Astrocyte of the cerebellum (primary cell): ENCODE measurements at regions of chr3 and their contacts with region 1.

Region 1: DNA sequence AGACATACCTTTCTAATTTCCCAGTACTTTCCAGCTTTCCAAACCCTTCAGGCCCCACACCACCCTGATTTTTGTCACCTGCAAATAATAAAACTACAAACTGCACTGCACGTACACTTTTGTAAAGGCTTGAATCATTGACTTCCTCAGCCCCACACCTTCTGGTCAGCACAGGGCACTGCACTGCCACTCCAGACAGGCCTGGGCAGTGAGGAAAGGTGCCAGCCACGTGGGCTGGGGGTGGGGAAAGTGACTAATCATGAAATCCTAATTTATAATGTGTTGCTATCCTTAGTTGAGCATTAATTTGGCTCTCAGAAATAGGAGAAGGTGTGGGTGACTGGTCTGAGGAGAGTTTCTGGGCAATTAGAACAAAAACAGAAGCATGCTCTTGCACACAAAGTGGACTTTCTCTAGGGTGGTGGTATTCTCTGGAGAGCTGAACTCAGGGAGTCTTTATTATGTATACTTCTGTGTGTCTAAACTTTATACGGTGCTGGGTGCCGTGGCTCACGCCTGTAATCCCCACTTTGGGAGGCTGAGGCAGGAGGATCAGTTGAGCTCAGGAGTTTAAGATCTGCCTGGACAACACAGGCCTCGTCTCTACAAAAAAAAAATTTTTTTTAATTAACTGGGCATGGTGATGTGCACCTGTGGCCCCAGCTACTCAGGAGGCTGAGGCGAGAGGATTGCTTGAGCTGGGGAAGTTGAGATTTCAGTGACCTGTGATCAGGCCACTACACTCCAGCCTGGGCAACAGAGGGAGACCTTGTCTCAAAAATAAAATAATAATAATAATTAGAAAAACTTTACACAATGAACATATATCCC is 58.2 kb upstream of the FLNB start:
- DNase-seq: no peak
- H3K4me3 ChIP-seq: no peak overlapping the region
- CTCF ChIP-seq: peak; percentile 17

Region 2: DNA sequence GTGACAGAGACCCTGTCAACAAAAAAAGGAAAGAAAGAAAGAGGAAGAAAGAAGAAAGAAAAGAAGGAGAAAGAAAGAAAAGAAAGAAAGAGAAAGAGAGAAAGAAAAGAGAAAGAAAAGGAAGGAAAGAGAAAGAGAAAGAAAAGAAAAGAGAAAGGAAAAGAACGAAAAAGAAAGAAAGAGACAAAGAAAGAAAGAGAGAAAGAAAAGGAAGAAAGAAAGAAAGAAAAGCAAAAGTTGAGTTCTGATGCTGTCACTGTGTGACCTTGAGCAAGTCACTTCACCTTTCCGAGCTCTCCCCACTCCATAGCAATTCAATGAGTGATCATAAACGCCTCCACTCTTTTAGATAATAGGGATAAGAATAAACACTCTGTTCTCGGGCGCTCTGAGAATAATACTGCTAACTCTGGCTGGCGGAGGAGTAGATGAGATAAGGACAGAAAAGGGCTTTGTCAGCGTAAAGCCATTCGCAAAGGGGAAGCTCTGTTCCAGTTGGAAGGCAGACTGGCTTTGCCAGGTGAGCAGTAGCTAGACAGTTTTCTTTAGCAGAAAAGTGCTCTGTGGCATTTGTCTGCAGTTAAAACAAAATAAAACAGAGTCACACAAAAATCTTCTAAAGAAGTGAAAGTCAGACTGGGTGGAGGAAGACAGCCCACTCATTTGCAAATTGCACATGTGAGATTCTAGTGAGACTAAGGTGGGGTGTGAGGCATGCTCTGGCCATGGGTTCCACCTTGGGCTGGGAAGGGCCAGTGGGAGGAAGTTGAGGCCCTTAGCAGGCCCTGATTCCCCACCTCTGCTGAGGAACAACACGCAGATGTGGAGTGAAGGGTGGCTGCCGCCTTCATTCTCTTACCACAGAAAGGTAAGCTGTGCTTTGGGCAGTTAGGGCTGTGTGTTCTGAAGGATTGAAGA is 48.6 kb after region 1 on chr3:
- in situ Hi-C with region 1: no loop called
- DNase-seq: no peak
- H3K4me3 ChIP-seq: no peak overlapping the region
- CTCF ChIP-seq: no peak

Region 3: DNA sequence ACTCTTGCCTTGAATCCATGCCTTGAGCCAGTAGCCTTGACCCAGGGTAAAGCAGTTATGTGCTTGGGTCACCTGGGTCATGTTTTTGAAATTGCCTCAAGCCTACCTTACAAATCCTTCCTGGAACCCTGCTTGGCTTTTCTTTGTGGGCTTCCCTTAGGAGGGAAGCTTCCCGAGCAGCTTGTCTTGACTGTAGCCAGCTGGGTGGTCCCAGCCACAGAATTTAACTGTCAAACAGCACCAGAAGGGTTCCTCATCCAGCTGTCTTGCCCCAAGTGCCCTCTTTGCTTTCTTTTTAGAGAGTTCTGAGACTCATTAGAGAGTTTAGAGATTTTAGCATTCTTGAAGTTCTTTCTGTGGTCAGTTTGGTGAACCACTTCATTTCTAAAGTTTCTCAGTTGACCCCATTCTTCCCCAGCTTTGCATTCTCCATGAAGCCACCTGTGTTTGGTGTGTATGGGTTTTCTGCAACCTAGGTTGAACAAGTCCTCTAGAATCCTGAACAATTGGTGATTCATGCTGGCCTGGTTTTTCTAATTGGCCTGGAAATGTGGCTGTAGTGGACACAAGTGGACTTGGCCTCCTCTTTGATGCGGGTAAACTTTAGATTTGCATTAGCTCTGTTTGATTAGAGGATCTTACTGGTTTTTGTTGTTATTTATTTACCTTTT is 91.8 kb after region 1 on chr3:
- in situ Hi-C with region 1: loop called (anchors 25 kb)
- DNase-seq: peak; percentile 98
- H3K4me3 ChIP-seq: no peak overlapping the region
- CTCF ChIP-seq: no peak

Region 4: DNA sequence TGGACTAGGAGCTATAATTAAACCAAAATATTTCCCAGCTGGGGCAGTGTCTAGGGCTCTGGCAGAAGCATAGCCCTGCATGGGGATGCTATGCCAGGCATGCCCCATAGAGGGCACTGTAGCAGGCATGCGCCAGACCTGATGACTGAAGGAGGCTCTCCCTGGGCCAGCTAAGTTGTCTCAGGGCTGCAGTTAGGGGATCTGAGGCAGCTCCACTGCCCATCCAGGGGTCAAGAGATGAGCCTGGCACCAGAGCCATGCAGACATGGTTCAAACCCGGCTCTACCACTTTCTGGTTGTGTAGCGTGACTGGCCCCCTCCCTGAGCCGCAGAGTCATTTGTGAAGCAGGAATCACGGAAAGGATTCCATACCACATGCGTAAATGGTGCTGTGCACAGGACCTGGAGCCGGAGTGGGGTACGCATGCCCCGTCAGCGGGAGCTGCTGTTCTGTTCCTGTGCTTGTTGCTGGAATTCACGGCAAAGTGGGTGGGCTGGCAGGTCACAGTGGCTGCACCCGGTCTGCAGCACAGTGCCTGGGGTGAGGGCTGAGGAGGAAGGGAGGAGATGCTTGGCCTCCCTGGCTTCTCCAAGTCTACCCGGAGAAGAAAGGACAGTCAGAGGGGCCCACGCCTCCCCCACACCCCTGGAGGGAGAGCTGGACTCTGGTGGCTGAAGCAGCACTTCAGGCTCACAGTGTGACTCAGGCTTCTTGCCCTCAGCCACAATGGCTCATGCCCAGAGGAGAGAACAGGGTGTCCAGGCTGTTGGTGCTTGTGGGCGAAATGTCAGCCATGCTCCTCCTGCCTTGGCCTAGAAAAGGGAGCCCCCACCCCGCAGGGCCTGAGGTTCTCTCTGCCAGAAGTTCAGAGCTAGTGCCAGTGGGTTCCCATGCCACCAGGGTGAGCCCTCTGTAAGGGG is 217.7 kb after region 1 on chr3:
- in situ Hi-C with region 1: loop called (anchors 10 kb)
- DNase-seq: no peak
- H3K4me3 ChIP-seq: no peak overlapping the region
- CTCF ChIP-seq: peak; percentile 97